Stomach (tissue), 19 donors: ENCODE measurements at regions of chr1 and their contacts with region 1.

Region 1: DNA sequence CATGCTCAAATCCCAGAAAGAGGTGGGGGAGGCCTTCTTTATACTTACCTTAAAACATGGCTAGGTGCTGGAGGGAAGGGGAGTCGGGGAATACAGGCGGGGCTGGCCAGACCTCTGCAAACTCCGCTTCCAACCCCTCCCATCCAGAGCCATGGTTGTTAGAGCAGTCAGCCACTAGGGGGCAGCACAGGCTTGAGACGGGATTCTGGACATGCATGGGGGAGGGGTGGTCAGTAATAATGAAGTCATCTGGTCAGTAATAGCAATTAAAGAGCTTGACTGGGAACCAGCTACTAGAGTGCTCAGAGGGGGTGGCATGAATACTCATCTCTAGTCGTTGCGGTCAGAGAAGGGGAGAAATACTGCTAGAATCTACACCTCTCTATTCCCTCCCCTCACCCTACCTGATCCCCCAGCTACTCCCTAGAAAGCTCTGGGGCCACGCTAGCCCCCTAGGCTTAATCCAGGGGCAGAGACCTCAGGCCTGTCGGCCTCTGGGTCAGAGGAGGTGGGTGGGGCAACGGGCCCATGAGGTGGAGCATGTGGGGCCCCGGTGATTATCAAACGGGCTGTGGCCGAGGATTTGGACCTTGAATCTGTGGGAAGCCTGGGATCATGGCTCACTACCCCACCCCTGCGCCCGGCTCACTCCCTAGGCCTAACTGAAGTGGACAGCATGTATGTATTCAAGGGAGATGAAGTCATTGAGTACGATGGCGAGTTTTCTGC is 2.9 kb downstream of the CASQ1 start:
- DNase-seq: peak; percentile 89 to 95
- H3K4me3 ChIP-seq: no peak overlapping the region
- H3K27ac ChIP-seq: peak overlapping the region in 1 of 5 donors; percentile 38
- H3K4me1 ChIP-seq: peaks cover 4 to 23% (median 12%) of the 10 kb centered on the region in 4 donors
- H3K27me3 ChIP-seq: no peaks in the 10 kb centered on the region
- CTCF ChIP-seq: peak in 6 of 7 experiments; percentile 42 to 96 (median 92)
- EP300 ChIP-seq: no peak
- POLR2A ChIP-seq: no peak

Region 2: GRCh38 chr1:160101037-160101716 is 92.1 kb before region 1 on chr1:
- intact Hi-C with region 1: loop called (anchors 10 kb)
- DNase-seq: peak; percentile 80 to 92
- H3K4me3 ChIP-seq: no peak overlapping the region
- H3K27ac ChIP-seq: peak overlapping the region in 4 of 5 donors; percentile 33 to 97 (median 76)
- H3K4me1 ChIP-seq: peaks cover 22 to 73% (median 57%) of the 10 kb centered on the region in 4 donors
- H3K27me3 ChIP-seq: no peaks in the 10 kb centered on the region
- CTCF ChIP-seq: peak in 6 of 7 experiments; percentile 18 to 96 (median 89)
- EP300 ChIP-seq: no peak
- POLR2A ChIP-seq: no peak

Region 3: DNA sequence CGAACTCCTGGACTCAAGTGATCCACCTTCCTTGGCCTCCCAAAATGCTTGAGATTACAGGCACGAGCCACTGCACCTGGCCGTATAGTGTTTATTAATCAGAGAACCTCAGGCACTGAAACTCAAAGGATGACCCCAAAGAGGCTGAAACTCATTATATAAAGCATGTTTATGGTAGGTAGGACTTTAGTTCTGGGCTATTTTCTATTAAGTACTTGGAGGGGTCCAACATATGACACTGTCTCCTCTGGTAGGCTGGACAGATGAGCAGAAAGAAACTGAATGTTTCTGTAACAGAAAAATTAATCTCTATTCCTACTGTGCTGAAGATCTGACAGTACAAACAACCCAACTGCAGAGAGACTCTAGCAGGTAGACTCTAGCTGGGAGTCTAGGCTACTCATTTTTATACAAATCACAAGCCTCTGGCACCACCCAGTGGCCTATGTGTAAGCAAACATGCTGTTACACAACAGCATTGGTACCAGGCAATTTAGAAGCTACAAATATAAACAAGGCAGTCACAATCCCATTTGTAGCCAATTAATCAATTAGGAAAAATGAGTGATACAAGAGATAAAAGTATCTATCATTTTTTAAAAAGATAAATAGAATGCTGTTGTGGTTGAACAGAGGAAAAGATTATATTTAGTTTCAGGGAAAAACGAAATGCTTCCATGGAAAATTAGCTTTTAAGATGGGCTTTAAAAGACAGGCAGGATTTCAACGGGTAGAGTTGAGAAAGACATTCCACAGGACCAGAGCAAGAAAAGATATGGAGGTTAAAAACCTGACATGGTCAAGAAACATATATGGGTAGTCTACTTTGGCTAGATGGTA is 58.7 kb after region 1 on chr1:
- intact Hi-C with region 1: loop called (anchors 5 kb)
- DNase-seq: peak; percentile 69 to 89
- H3K4me3 ChIP-seq: no peak overlapping the region
- H3K27ac ChIP-seq: peak overlapping the region in 2 of 5 donors; percentile 32 to 62
- H3K4me1 ChIP-seq: peaks cover 10 to 50% (median 33%) of the 10 kb centered on the region in 4 donors
- H3K27me3 ChIP-seq: no peaks in the 10 kb centered on the region
- CTCF ChIP-seq: peak in 5 of 7 experiments; percentile 47 to 73 (median 59)
- EP300 ChIP-seq: no peak
- POLR2A ChIP-seq: no peak

Region 4: GRCh38 chr1:160284782-160285344 is 91.6 kb after region 1 on chr1 and contains the start of gene PEX19:
- intact Hi-C with region 1: loop called (anchors 10 kb)
- DNase-seq: peak; percentile 94 to 98
- H3K4me3 ChIP-seq: peak within 1 kb of the TSS; percentile 69 to 95 (median 83)
- H3K27ac ChIP-seq: peak within 1 kb of the TSS; percentile 38 to 90 (median 86)
- H3K4me1 ChIP-seq: peaks cover 8 to 27% (median 25%) of the 10 kb centered on the region in 4 donors
- H3K27me3 ChIP-seq: no peaks in the 10 kb centered on the region
- CTCF ChIP-seq: no peak
- EP300 ChIP-seq: no peak
- POLR2A ChIP-seq: peak in 1 of 4 donors; percentile 17
- total RNA-seq, gene PEX19: 9.3 to 117 (median 56.0) TPM